HCT116 (cell line): ENCODE measurements at regions of chr12 and their contacts with region 1.

Region 1: DNA sequence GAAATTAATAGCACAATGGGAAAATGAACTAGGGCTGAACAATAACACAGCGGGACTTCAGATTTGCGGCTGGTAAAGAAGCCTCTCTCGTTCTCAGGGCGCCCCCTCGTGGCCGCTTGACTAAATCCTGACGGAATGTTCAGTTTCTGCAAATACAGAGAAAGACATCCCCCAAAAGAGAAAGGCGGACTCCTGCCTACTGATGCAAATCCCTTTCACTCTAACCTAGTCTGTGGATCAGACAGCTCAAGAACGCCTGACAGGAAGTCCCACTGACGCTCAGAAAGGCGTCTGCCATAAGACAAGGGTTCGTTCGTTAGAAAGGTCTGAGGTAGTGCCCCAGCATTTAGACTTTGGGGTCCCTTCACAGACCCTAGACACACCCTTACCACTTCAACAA is 2.5 kb downstream of the NUAK1 start:
- DNase-seq: peak; percentile 37
- ATAC-seq: no peak
- H3K4me3 ChIP-seq: no peak overlapping the region
- H3K27ac ChIP-seq: no peak overlapping the region
- H3K4me1 ChIP-seq: peaks cover 28 to 40% of the 10 kb centered on the region in 2 experiments
- H3K27me3 ChIP-seq: no peaks in the 10 kb centered on the region
- CTCF ChIP-seq: peak; percentile 69 to 89 (median 83)
- POLR2A ChIP-seq: no peak
- RAD21 ChIP-seq: peak; percentile 95

Region 2: DNA sequence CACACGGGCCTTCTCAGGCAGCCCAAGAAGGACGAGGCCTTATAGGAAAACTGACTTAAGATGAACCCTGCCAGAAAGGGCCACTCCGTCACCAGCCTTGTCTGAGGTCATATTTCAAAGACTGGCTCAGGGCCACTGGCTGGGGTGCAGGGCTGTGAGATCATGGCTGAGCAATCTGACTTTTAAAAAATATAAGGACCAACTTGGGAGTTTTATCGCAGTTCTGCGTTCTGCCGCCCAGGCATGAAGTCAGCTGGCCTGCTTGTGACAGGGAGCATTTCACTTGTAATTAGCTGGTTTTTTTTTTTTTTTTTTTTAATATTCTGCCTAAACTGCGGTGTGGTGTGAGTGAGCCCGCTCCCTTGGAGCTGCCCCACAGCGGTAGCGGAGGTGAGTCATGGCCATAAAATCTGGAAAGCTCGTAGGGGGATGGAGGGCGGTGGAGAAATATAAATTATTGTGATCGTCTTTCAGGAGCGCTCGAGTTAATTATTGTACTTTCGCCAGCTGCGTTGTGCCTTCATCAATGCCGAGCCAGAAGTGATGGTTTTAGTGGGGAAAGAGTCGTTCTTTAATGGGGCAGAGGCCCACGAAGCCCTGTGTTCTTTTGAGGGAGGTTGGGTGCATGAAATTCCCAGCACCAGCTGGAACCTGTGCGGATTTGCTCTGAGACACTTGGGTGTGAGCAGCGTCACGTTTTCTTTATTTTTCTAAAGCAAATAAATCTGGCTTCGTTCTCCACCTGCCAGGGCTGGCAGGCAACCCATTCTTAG is 573.9 kb before region 1 on chr12:
- CTCF ChIA-PET with region 1: no interaction called
- POLR2A ChIA-PET with region 1: no interaction called
- RAD21 ChIA-PET with region 1: no interaction called
- intact Hi-C with region 1: loop called (anchors 10 kb)
- DNase-seq: peak; percentile 76
- ATAC-seq: peak; percentile 88
- H3K4me3 ChIP-seq: peak overlapping the region; percentile 36 to 51
- H3K27ac ChIP-seq: peak overlapping the region; percentile 56
- H3K4me1 ChIP-seq: peaks cover 22 to 26% of the 10 kb centered on the region in 2 experiments
- H3K27me3 ChIP-seq: no peaks in the 10 kb centered on the region
- CTCF ChIP-seq: no peak
- POLR2A ChIP-seq: no peak
- RAD21 ChIP-seq: no peak; the same call in none of the 2 replicates

Region 3: GRCh38 chr12:105705765-105706164 is 430.5 kb before region 1 on chr12:
- CTCF ChIA-PET with region 1: interaction called, 6 read pairs
- POLR2A ChIA-PET with region 1: no interaction called
- RAD21 ChIA-PET with region 1: interaction called in 1 of 2 experiments, 3 read pairs
- intact Hi-C with region 1: loop called (anchors 2 kb)
- DNase-seq: peak; percentile 33
- ATAC-seq: peak; percentile 78
- H3K4me3 ChIP-seq: no peak overlapping the region
- H3K27ac ChIP-seq: no peak overlapping the region
- H3K4me1 ChIP-seq: peaks cover 0 to 7% of the 10 kb centered on the region in 2 experiments; a peak in 2 of 4 replicates
- H3K27me3 ChIP-seq: no peaks in the 10 kb centered on the region
- CTCF ChIP-seq: peak; percentile 66 to 90 (median 80)
- POLR2A ChIP-seq: no peak
- RAD21 ChIP-seq: peak; percentile 66

Region 4: DNA sequence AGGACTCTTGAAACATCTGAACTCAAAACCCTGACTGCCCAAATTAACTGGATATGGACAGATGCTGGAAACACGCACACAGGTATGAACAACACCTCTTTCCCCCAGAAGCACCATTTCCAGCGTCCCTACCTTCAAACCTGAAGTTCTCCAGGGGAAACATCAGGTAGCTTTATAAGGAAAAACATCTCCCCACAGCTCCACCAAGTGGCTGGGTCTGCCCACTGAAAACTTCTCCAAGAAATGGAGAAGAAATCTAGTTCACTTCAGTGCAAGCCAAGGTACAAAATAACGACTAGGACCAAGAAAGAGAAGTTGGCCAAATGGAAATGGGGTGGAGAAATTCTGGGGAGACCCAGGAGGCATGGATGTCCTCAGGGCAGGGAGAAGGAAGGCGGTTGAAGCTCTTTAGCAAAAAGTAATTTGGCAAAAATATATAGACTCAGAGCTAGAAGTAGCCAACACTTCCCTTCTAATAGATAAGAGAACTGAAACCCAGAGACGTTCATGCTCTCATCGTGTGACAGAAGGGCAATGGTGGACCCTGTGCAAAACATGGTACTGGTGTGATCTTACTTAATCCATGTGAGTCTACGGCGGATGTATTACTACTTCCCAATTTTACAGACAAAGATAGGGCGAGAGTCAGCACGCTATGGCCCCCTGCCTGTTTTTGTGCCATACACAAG is 13.0 kb after region 1 on chr12:
- CTCF ChIA-PET with region 1: interaction called, 14 read pairs
- POLR2A ChIA-PET with region 1: no interaction called
- RAD21 ChIA-PET with region 1: interaction called in 1 of 2 experiments, 3 read pairs
- intact Hi-C with region 1: no loop called
- DNase-seq: peak; percentile 33
- ATAC-seq: peak; percentile 88
- H3K4me3 ChIP-seq: no peak overlapping the region
- H3K27ac ChIP-seq: no peak overlapping the region
- H3K4me1 ChIP-seq: peaks cover 8 to 12% of the 10 kb centered on the region in 2 experiments; a peak in 3 of 4 replicates
- H3K27me3 ChIP-seq: no peaks in the 10 kb centered on the region
- CTCF ChIP-seq: peak; percentile 56 to 73 (median 71); a peak in 5 of 6 replicates
- POLR2A ChIP-seq: no peak
- RAD21 ChIP-seq: peak; percentile 61